Heart right ventricle (tissue), 16 donors: ENCODE measurements at regions of chr22 and their contacts with region 1.

Region 1: DNA sequence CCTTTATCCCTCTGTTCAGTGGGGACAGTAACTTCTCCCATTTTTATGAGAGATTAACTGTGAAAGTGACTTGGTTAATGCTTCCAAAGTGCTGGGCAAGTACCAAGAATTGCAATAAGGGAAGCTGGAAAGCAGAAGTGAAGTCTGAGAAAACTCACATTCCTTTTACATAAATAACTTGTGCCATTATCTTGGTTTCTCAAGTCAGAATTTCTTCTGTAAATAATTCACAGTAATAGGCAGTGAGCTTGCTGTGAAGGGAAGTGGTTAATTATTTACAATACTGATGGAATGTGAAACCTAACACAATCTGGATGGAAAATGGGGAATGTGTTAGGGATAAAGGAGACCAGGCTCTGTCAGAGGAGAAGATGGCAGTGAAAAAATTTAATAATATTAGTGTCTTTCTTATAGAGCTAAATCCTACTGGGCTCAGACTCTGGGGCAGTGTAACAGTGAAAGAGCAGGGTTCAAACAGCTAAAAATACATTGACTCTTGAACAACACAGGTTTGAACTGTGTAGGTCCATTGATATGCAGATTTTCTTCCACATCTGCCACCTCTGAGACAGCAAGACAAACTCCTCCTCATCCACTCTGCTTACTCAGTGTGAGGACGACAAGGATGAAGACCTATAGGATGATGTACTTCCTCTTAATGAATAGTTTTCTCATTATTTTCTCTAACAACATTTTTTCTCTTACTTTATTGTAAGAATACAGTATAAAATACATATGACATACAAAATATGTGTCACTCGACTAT is 251.5 kb upstream of the ISX start:
- DNase-seq: no peak
- ATAC-seq: no peak
- H3K4me3 ChIP-seq: no peak overlapping the region
- H3K27ac ChIP-seq: no peak overlapping the region
- H3K4me1 ChIP-seq: no peaks in the 10 kb centered on the region
- H3K27me3 ChIP-seq: peaks cover 0 to 15% (median 0%) of the 10 kb centered on the region in 7 donors
- CTCF ChIP-seq: no peak

Region 2: DNA sequence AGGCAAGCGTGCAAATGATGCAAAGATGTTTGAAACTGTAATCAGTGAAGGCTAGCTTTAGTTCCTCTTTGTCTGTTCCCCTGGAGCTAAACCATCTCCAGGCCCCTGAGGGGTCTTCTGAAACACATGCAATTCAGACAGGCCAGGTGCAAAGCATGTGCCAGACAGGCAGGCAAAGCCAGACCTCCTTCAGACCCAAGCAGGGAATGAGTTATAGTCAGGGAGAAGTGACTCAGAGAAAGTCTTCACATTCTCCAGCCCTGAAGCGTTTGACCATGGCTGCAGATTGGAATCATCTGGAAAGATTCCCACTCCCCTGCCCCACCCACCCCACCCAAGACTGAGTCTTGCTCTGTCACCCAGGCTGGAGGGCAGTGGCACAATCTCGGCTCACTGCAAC is 64.6 kb after region 1 on chr22:
- intact Hi-C with region 1: loop called in 1 of 10 experiments (anchors 10 kb)
- DNase-seq: no peak
- ATAC-seq: no peak
- H3K4me3 ChIP-seq: no peak overlapping the region
- H3K27ac ChIP-seq: no peak overlapping the region
- H3K4me1 ChIP-seq: no peaks in the 10 kb centered on the region
- H3K27me3 ChIP-seq: peaks cover 0 to 23% (median 3%) of the 10 kb centered on the region in 7 donors
- CTCF ChIP-seq: no peak